AG04450 (cell line): ENCODE measurements at regions of chr3 and their contacts with region 1.

Region 1: DNA sequence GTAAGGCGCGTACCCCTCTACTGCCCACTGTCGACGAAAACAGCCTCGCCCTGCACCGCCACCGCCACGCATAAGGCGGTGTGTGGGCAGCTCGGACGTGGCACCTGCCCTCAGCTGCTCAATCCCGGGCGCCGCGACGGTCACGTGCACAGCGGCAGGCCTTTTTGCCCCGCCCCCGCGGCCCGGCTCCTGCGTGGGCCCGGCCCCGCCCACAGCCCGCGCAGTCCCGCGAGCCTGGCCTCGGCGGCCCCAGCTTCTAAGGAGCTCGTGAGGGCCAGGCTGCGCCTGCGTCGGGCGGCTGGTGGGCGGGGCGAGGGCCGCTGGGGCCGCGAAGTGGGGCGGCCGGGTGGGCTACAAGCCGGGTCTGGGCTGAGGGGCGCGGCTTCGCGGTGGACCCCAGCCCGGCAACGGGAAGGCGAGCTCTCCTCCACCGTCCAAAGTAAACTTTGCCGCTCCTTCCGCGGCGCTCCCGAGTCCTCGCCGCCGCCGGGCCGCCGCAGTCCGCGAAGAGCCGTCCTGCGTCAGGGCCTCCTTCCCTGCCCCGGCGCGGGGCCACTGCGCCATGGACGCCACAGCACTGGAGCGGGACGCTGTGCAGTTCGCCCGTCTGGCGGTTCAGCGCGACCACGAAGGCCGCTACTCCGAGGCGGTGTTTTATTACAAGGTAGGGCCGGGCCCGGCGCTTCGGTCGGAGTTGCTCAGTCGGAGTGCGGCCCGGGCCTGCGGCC is at the start of gene CAPN7:
- DNase-seq: peak; percentile 83
- H3K4me3 ChIP-seq: peak within 1 kb of the TSS; percentile 92
- H3K27ac ChIP-seq: peak within 1 kb of the TSS; percentile 75
- H3K27me3 ChIP-seq: no peaks in the 10 kb centered on the region
- CTCF ChIP-seq: peak; percentile 65
- polyA plus RNA-seq, gene CAPN7: 21.8 and 29.0 TPM in 2 replicates

Region 2: DNA sequence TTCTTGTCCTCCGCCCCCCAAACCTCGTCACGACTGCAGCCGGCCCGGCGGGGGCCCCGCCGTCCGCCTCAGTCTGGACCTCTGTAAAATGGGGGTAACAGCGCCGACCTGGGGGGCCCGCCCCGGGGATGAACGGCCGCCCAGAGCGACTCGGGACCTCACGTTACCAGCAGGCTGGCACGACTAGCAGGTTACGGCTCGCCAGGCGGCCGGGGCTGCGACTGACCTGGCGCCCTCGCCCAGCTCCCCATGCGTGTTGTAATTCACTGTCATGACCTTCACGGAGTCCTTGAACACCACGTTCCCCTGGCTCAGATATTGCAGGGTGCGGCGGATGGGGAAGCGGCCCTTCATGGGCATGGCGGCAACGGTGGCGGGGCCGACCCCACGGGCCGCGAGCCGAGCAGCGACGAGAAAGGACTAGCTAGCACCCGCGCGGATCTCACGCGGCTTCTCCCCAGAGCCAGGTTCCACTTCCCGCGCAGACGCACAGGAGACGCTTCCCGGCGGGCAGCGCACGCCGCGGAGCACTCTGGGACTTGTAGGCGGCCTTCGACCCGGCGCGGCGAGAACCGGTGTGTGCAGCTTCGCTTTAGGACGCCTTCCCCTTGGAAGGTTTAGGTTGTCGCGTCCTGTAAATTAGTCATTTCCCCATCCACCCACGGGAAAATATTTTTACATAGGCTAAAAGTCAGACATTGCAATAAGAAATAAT is 141.1 kb before region 1 on chr3 and contains the start of gene MRPS25:
- CTCF ChIA-PET with region 1: no interaction called
- POLR2A ChIA-PET with region 1: interaction called, 10 read pairs
- DNase-seq: peak; percentile 83
- H3K4me3 ChIP-seq: peak within 1 kb of the TSS; percentile 98
- H3K27ac ChIP-seq: peak within 1 kb of the TSS; percentile 57
- H3K27me3 ChIP-seq: no peaks in the 10 kb centered on the region
- CTCF ChIP-seq: no peak
- polyA plus RNA-seq, gene MRPS25: 17.9 and 22.8 TPM in 2 replicates

Region 3: DNA sequence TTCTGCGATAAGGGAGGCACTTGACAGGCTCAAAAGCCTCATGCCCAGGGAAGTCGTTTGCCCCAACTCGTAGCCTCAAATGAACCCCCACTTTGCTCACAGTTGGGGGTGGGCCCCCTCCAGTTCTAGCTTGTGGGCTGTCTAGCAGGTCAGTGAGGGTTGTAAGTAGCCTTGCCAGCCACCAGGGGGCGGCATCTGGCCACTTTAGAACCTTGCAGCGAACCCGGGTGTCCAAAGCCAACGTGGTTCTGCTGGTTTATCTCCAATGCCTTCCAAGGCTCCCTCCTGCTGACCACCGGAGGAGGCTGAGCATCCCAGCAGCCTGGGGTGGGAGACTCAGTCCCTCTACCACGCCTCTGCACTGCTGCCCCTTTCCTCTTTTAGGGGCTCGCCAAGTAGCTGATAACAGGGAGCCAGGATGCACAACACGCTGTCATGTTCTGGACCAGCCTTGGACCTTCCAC is 98.0 kb before region 1 on chr3:
- CTCF ChIA-PET with region 1: interaction called, 98 read pairs
- POLR2A ChIA-PET with region 1: no interaction called
- DNase-seq: peak; percentile 50
- H3K4me3 ChIP-seq: no peak overlapping the region
- H3K27ac ChIP-seq: no peak overlapping the region
- H3K27me3 ChIP-seq: peaks cover 9% of the 10 kb centered on the region
- CTCF ChIP-seq: peak; percentile 89

Region 4: GRCh38 chr3:15377961-15378791 is 172.1 kb after region 1 on chr3:
- CTCF ChIA-PET with region 1: interaction called, 14 read pairs
- POLR2A ChIA-PET with region 1: interaction called, 3 read pairs
- DNase-seq: peak; percentile 79
- H3K4me3 ChIP-seq: no peak overlapping the region
- H3K27ac ChIP-seq: no peak overlapping the region
- H3K27me3 ChIP-seq: no peaks in the 10 kb centered on the region
- CTCF ChIP-seq: peak; percentile 90

Region 5: DNA sequence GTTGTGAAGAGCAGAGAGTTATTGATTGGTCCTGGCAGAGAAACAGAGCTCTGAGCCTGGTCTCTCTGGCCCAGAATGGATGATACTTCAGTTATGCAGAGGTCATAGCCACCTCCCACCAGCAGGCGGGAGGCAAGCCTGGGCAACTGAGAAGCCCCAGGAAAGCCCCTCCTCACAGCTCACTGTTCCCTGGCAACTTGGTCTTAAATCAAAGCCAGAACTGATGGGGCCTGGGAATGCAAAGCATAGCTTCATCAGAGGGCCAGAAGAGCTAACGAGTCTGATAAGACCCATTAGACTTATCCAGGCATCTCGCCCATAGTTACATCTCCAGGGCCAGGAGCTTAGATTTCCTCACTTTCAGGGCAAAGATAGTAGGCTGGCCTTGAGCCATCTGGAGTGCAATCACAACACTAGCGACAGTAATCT is 320.9 kb after region 1 on chr3:
- CTCF ChIA-PET with region 1: no interaction called
- POLR2A ChIA-PET with region 1: no interaction called
- DNase-seq: no peak
- H3K4me3 ChIP-seq: no peak overlapping the region
- H3K27ac ChIP-seq: no peak overlapping the region
- H3K27me3 ChIP-seq: no peaks in the 10 kb centered on the region
- CTCF ChIP-seq: peak; percentile 33

Region 6: DNA sequence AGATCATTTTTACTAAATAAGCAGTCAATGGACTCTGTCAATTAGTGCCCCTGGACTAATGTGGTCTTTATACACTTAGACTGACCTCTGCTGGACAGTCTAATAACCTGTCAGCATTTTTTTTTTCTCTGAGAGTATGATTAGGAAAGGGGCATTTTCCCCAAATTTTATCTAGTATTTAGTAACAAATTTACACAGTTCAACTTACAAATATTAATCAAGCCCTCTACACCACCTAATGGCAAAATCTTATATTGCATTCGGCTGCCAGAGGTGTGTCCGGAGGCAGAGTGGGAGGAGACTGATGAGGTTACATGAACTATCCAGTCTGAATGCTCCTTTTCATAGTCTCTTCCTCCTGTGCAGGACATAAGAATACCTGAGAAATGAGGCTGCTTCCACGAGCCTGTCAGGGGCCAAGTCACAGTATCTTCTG is 351.4 kb after region 1 on chr3:
- CTCF ChIA-PET with region 1: interaction called, 46 read pairs
- POLR2A ChIA-PET with region 1: interaction called, 3 read pairs
- DNase-seq: peak; percentile 39
- H3K4me3 ChIP-seq: no peak overlapping the region
- H3K27ac ChIP-seq: no peak overlapping the region
- H3K27me3 ChIP-seq: no peaks in the 10 kb centered on the region
- CTCF ChIP-seq: peak; percentile 67